Activated T-helper 1 cell treated with anti-CD3 and anti-CD28 coated beads, Interleukin-12 subunit alpha, Interleukin-12 subunit beta, Interleukin-2, Interleukin-4 antibody, amounts not matched to agents 30 ng/mL and 10 ng/mL and 1 ng/mL, durations not matched to agents 14 hours and 24 hours and 36 hours (primary cell): ENCODE measurements at regions of chr11 and their contacts with region 1.

Region 1: DNA sequence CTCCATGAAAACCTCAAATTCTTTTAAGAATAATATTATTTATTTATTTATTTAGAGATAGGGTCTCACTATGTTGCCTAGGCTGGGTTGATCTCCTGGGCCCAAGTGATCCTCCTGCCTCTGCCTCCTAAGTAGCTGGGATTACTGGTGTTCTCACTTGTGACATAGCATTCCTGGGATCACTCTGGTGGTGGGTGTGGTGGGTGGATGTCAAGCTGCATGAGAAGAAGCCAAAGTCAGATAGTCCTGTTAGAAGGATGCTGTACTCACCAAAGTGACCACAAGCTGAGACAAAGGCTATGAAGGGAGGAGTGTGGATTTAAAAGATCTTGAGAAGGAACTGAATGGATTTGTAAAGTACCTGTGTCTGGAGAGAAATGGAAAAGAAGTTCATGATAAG is 87.9 kb upstream of the SPON1 start:
- DNase-seq: no peak
- H3K4me3 Mint-ChIP-seq: no peak overlapping the region
- H3K27ac Mint-ChIP-seq: no peak overlapping the region
- H3K4me1 Mint-ChIP-seq: peaks cover 19% of the 10 kb centered on the region
- H3K27me3 Mint-ChIP-seq: peaks cover 10% of the 10 kb centered on the region

Region 2: DNA sequence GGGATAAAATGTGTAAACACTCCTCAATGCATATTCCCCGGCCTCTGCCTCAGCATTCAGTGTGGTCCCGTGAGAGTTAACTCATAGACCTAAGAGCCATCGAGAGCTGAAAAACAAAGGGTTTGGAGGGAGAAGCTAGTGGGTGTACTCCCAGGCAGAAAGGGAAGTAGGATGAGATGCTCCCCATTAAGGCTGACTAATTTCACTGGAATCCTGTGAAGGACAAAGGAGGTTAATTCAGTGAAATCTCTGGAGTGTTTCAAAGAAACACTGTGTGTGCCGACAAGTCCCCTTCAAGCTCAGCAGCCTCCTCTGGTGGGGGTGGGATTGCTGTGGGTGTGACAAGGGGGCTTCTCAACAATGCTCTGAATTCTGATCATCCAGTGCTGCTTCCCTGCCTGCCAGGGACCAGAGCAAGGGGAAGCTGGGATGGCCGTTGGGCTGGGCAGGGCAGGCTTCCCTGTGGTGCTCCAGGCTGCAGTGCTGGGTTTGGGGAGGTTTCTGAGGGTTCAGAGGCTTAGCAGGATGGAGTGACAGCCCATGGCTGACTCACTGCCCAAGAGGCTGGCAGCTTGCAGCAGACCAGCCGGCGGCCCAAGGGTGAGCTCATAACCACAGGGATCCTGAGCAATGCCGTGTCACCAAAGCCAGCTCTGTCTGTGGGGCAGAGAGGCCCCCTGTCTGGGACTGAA is 658.4 kb before region 1 on chr11:
- intact Hi-C with region 1: no loop called
- DNase-seq: no peak
- H3K4me3 Mint-ChIP-seq: no peak overlapping the region
- H3K27ac Mint-ChIP-seq: no peak overlapping the region
- H3K4me1 Mint-ChIP-seq: no peaks in the 10 kb centered on the region
- H3K27me3 Mint-ChIP-seq: peaks cover 3% of the 10 kb centered on the region

Region 3: DNA sequence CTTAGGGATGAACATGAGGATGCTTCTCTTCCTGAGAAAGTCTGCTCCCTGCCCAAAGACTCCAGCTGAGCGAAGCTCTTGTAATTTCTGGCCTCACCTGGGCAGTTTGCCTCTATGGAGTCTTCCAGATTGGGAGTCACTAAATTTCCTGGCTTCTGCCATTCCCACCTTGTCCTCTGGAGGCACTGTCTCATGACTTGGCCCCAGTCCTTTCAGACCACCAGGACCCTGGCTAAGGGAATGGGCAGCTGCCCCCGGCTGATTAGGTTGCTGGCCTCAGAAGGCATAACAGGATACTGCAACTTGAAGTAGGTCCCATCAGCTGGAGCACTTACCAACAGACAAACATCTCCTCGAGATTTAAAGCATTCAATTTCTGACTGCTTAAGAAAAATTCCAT is 40.1 kb before region 1 on chr11:
- intact Hi-C with region 1: no loop called
- DNase-seq: no peak
- H3K4me3 Mint-ChIP-seq: no peak overlapping the region
- H3K27ac Mint-ChIP-seq: no peak overlapping the region
- H3K4me1 Mint-ChIP-seq: no peaks in the 10 kb centered on the region
- H3K27me3 Mint-ChIP-seq: peaks cover 4% of the 10 kb centered on the region

Region 4: GRCh38 chr11:13923716-13924650 is 49.4 kb after region 1 on chr11:
- intact Hi-C with region 1: loop called (anchors 5 kb)
- DNase-seq: peak; percentile 13
- H3K4me3 Mint-ChIP-seq: peak overlapping the region; percentile 67
- H3K27ac Mint-ChIP-seq: peak overlapping the region; percentile 92
- H3K4me1 Mint-ChIP-seq: peaks cover 41% of the 10 kb centered on the region
- H3K27me3 Mint-ChIP-seq: peaks cover 2% of the 10 kb centered on the region

Region 5: GRCh38 chr11:13949876-13950275 is 75.3 kb after region 1 on chr11:
- intact Hi-C with region 1: no loop called
- DNase-seq: no peak
- H3K4me3 Mint-ChIP-seq: no peak overlapping the region
- H3K27ac Mint-ChIP-seq: no peak overlapping the region
- H3K4me1 Mint-ChIP-seq: peaks cover 15% of the 10 kb centered on the region
- H3K27me3 Mint-ChIP-seq: peaks cover 22% of the 10 kb centered on the region